CD8-positive, alpha-beta T cell (primary cell): ENCODE measurements at regions of chr3 and their contacts with region 1.

Region 1: GRCh38 chr3:27712136-27713077 is 9.7 kb downstream of the EOMES start:
- DNase-seq: peak; percentile 61 to 91 (median 79)
- ATAC-seq: peak; percentile 86
- H3K4me3 ChIP-seq: peak overlapping the region; percentile 73 to 94
- H3K4me3 Mint-ChIP-seq: peak overlapping the region; percentile 95
- H3K27ac ChIP-seq: peak overlapping the region; percentile 44 to 74
- H3K27ac Mint-ChIP-seq: peak overlapping the region; percentile 87
- H3K4me1 ChIP-seq: peaks cover 20% of the 10 kb centered on the region
- H3K4me1 Mint-ChIP-seq: peaks cover 28% of the 10 kb centered on the region
- H3K27me3 ChIP-seq: peaks cover 4 to 11% of the 10 kb centered on the region in 2 experiments
- H3K27me3 Mint-ChIP-seq: peaks cover 18% of the 10 kb centered on the region
- CTCF ChIP-seq: peak; percentile 67

Region 2: GRCh38 chr3:27699067-27699466 is 13.3 kb before region 1 on chr3:
- CTCF ChIA-PET with region 1: interaction called, 18 read pairs
- POLR2A ChIA-PET with region 1: no interaction called
- intact Hi-C with region 1: no loop called
- DNase-seq: no peak
- ATAC-seq: no peak
- H3K4me3 ChIP-seq: no peak overlapping the region
- H3K4me3 Mint-ChIP-seq: no peak overlapping the region
- H3K27ac ChIP-seq: no peak overlapping the region
- H3K27ac Mint-ChIP-seq: no peak overlapping the region
- H3K4me1 ChIP-seq: no peaks in the 10 kb centered on the region
- H3K4me1 Mint-ChIP-seq: no peaks in the 10 kb centered on the region
- H3K27me3 ChIP-seq: no peaks in the 10 kb centered on the region
- H3K27me3 Mint-ChIP-seq: no peaks in the 10 kb centered on the region
- CTCF ChIP-seq: no peak

Region 3: GRCh38 chr3:28089527-28089897 is 377.1 kb after region 1 on chr3:
- CTCF ChIA-PET with region 1: interaction called, 8 read pairs
- POLR2A ChIA-PET with region 1: interaction called, 3 read pairs
- intact Hi-C with region 1: loop called (anchors 1 to 2 kb)
- DNase-seq: peak in 2 of 9 experiments; percentile 25 to 48
- ATAC-seq: no peak
- H3K4me3 ChIP-seq: no peak overlapping the region
- H3K4me3 Mint-ChIP-seq: no peak overlapping the region
- H3K27ac ChIP-seq: peak overlapping the region in 1 of 2 experiments; percentile 47
- H3K27ac Mint-ChIP-seq: peak overlapping the region; percentile 64
- H3K4me1 ChIP-seq: no peaks in the 10 kb centered on the region
- H3K4me1 Mint-ChIP-seq: peaks cover 6% of the 10 kb centered on the region
- H3K27me3 ChIP-seq: no peaks in the 10 kb centered on the region
- H3K27me3 Mint-ChIP-seq: no peaks in the 10 kb centered on the region
- CTCF ChIP-seq: no peak

Region 4: DNA sequence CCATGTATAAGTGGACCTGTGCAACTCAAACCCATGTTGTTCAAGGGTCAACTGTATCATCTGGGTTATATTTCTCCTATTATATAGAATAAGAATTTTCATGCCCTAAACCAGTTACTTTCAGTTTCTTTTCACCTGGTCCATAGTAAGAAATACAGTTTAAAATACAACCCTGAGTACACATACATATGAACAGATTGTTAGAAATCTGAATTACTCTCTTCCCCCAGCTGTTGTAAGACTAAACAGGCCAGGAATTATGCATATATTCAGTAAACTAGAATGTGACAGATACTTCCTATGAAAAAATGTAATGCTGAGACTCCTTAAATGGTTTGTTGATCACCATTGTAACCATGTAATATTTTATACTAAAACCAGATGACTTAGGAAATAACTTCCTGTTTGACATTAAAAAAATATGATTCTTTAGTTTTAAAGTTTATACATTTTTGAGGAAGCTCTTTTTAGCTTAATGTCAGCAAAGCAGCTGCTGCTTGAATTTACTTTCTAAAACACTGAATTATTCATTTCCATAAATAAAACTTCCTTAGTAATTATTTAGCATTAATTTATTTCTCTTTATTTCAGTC is 583.6 kb after region 1 on chr3:
- CTCF ChIA-PET with region 1: interaction called, 16 read pairs
- POLR2A ChIA-PET with region 1: interaction called, 3 read pairs
- intact Hi-C with region 1: no loop called
- DNase-seq: peak in 1 of 9 experiments; percentile 28
- ATAC-seq: no peak
- H3K4me3 ChIP-seq: peak overlapping the region in 1 of 2 experiments; percentile 49
- H3K4me3 Mint-ChIP-seq: peak overlapping the region; percentile 50
- H3K27ac ChIP-seq: peak overlapping the region in 1 of 2 experiments; percentile 75
- H3K27ac Mint-ChIP-seq: peak overlapping the region; percentile 33
- H3K4me1 ChIP-seq: peaks cover 9% of the 10 kb centered on the region
- H3K4me1 Mint-ChIP-seq: peaks cover 36% of the 10 kb centered on the region
- H3K27me3 ChIP-seq: no peaks in the 10 kb centered on the region
- H3K27me3 Mint-ChIP-seq: no peaks in the 10 kb centered on the region
- CTCF ChIP-seq: no peak

Region 5: GRCh38 chr3:28328188-28329151 is 616.1 kb after region 1 on chr3:
- CTCF ChIA-PET with region 1: interaction called, 130 read pairs
- POLR2A ChIA-PET with region 1: interaction called, 28 read pairs
- intact Hi-C with region 1: loop called (anchors 1 kb)
- DNase-seq: peak in 2 of 9 experiments; percentile 62 to 72
- ATAC-seq: peak; percentile 32
- H3K4me3 ChIP-seq: no peak overlapping the region
- H3K4me3 Mint-ChIP-seq: no peak overlapping the region
- H3K27ac ChIP-seq: peak overlapping the region in 1 of 2 experiments; percentile 21
- H3K27ac Mint-ChIP-seq: peak overlapping the region; percentile 72
- H3K4me1 ChIP-seq: peaks cover 13% of the 10 kb centered on the region
- H3K4me1 Mint-ChIP-seq: peaks cover 31% of the 10 kb centered on the region
- H3K27me3 ChIP-seq: no peaks in the 10 kb centered on the region
- H3K27me3 Mint-ChIP-seq: no peaks in the 10 kb centered on the region
- CTCF ChIP-seq: peak; percentile 83

Region 6: DNA sequence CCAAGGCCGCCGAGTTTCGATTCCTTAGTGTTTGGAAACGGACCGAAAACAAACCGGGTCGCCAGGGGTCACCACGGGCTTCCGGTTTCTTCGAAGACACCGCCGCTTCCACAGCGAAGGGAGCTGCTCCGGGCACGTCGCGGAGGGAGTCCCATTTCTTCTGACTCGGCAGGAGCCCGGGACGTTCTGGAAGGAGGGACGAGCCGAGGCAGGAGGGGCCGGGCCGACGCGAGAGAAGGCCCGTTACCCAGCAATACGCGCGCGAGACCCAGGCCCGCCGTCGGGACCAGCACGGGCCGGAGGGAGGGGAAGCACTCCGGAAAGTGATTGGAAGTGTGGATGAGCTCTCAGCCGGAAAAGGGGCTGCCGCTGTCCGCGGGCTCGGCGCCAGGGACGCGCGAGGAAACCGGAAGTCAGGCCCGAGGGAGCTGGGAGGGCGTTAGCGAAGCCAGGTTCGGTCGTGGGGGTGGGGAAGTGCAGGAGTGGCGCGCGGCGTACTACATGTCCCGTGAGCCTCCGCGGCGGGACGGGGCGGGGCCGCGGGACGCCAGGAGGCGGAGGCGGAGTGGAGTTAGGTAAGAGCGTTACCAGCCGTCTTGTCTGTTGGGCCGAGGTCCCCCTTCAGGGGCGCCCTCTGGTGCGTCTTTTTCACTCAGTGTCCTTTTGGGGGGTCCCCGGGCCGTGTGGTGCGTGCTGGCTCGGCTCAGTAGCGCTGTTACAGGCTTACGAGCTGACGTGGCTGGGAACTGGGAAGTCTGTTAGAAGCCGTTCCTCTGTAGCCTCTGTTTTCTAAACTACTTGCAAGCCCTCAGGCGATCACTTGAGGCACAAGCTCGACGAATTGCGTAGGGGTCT is 636.4 kb after region 1 on chr3 and contains the starts of genes AZI2 and ZCWPW2:
- CTCF ChIA-PET with region 1: interaction called, 15 read pairs
- POLR2A ChIA-PET with region 1: interaction called, 9 read pairs
- intact Hi-C with region 1: loop called in 1 of 2 experiments (anchors 5 kb)
- DNase-seq: peak; percentile 84 to 96 (median 91)
- ATAC-seq: peak; percentile 89
- H3K4me3 ChIP-seq: peak within 1 kb of the TSS; percentile 96 to 97
- H3K4me3 Mint-ChIP-seq: peak within 1 kb of the TSS; percentile 98
- H3K27ac ChIP-seq: peak within 1 kb of the TSS; percentile 95 to 99
- H3K27ac Mint-ChIP-seq: peak within 1 kb of the TSS; percentile 95
- H3K4me1 ChIP-seq: peaks cover 35% of the 10 kb centered on the region
- H3K4me1 Mint-ChIP-seq: peaks cover 60% of the 10 kb centered on the region
- H3K27me3 ChIP-seq: no peaks in the 10 kb centered on the region
- H3K27me3 Mint-ChIP-seq: no peaks in the 10 kb centered on the region
- CTCF ChIP-seq: no peak
- total RNA-seq, gene AZI2: 27.2 to 29.2 TPM
- total RNA-seq, gene ZCWPW2: 0.54 TPM in 1 of 2 experiments, not detected in the other

Region 7: DNA sequence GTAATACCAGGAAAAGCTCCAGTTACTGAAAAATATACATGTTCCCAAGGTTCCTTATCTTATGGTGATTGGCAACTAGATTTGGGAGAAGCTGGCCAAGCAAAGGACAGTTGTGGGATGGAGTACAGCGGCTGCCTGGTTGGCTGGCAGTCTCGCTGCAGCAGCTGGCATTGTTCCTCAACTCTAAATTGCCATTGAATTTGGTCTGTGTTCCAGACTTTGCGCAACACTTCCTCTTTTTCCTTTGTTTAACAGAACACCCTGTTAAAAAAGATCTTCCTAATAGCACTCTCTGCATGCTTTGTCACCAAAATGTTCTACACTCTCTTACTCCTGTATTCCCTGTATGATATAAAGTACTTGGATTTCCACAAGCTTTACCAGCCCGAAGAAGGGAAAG is 1147.9 kb after region 1 on chr3:
- CTCF ChIA-PET with region 1: no interaction called
- POLR2A ChIA-PET with region 1: no interaction called
- intact Hi-C with region 1: no loop called
- DNase-seq: no peak
- ATAC-seq: no peak
- H3K4me3 ChIP-seq: no peak overlapping the region
- H3K4me3 Mint-ChIP-seq: no peak overlapping the region
- H3K27ac ChIP-seq: no peak overlapping the region
- H3K27ac Mint-ChIP-seq: no peak overlapping the region
- H3K4me1 ChIP-seq: no peaks in the 10 kb centered on the region
- H3K4me1 Mint-ChIP-seq: no peaks in the 10 kb centered on the region
- H3K27me3 ChIP-seq: no peaks in the 10 kb centered on the region
- H3K27me3 Mint-ChIP-seq: no peaks in the 10 kb centered on the region
- CTCF ChIP-seq: no peak

Region 8: GRCh38 chr3:28891485-28891884 is 1179.1 kb after region 1 on chr3:
- CTCF ChIA-PET with region 1: no interaction called
- POLR2A ChIA-PET with region 1: no interaction called
- intact Hi-C with region 1: no loop called
- DNase-seq: no peak
- ATAC-seq: no peak
- H3K4me3 ChIP-seq: no peak overlapping the region
- H3K4me3 Mint-ChIP-seq: no peak overlapping the region
- H3K27ac ChIP-seq: no peak overlapping the region
- H3K27ac Mint-ChIP-seq: no peak overlapping the region
- H3K4me1 ChIP-seq: no peaks in the 10 kb centered on the region
- H3K4me1 Mint-ChIP-seq: no peaks in the 10 kb centered on the region
- H3K27me3 ChIP-seq: no peaks in the 10 kb centered on the region
- H3K27me3 Mint-ChIP-seq: no peaks in the 10 kb centered on the region
- CTCF ChIP-seq: no peak